ENCODE measurements at regions of chr9 and their contacts with region 1.

Region 1: DNA sequence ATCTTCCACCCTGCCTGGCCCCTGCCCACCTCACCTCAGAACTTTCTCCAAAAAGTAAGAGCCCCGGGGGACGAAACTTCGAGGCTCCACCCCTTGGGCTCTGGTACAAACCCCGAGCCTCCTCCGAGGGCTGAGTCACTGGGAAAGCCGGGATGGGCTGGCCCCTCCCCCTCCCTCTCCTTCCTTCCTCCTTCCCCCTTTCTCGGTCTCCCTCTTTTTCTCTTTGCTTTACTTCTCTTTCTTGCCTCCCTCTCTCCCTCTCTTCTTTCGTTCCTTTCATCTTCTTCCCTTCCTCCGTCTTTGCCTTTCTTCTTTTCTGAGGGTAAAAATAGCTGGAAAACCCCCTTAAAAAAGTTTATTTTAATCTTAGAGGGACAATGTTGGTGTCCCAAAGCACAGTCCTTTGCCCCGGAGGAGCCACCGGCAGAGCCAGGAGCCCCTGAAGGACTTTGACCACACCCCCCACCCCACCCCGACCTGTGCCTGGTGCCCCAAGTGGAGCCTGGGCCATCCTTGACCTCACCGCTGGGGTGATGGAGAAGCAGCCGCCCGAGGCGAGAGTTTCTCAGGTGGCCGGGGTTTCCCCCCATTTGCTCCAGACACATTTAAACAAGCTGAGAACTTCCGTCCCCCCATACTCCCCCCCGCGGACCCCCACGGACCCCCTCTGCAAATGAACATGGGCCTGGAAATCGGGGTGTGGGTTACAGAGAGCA is 5.7 kb upstream of the NOTCH1 start:
- DNase-seq: peak; percentile 53

Region 2: GRCh38 chr9:136482793-136483588 is 68.6 kb before region 1 on chr9 and contains the start of gene SEC16A:
- in situ Hi-C with region 1: loop called (anchors 10 kb)
- DNase-seq: peak; percentile 83
- total RNA-seq, gene SEC16A: 4.4 and 5.4 TPM in 2 replicates

Region 3: DNA sequence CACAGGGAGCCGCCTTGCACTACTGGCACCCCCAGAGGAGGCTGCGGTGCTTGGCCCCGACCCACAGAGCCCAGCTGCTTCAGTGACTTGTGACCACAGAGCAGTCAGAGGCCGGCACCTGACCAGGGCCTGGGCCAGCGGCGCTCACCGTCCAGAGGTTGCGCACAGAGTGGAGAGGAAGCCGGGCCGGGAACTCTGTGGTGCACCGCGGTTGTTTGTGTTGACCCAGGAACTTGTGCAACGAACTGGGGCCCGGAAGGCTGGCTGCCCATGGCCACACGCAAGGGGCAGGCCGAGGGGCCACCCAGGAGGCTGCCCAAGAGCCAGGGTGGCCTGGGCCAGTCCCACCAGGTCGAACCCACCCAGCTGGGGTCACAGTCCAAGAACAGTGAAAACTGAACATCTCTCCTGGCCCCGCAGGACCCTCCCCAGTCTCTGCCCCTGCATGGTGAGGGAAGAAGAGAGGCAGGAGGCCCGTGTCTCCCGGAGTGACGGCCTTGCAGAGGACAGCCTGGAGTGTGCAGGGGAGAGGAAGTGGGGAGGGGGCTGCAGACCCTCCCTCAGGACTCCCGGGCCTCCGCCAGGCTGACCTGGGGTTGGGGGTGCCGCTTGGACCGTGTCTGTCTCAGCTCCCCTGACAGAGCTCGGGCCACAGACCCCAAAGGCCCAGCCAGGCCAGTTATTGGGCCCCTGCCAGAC is 68.3 kb after region 1 on chr9:
- in situ Hi-C with region 1: no loop called
- DNase-seq: no peak

Region 4: DNA sequence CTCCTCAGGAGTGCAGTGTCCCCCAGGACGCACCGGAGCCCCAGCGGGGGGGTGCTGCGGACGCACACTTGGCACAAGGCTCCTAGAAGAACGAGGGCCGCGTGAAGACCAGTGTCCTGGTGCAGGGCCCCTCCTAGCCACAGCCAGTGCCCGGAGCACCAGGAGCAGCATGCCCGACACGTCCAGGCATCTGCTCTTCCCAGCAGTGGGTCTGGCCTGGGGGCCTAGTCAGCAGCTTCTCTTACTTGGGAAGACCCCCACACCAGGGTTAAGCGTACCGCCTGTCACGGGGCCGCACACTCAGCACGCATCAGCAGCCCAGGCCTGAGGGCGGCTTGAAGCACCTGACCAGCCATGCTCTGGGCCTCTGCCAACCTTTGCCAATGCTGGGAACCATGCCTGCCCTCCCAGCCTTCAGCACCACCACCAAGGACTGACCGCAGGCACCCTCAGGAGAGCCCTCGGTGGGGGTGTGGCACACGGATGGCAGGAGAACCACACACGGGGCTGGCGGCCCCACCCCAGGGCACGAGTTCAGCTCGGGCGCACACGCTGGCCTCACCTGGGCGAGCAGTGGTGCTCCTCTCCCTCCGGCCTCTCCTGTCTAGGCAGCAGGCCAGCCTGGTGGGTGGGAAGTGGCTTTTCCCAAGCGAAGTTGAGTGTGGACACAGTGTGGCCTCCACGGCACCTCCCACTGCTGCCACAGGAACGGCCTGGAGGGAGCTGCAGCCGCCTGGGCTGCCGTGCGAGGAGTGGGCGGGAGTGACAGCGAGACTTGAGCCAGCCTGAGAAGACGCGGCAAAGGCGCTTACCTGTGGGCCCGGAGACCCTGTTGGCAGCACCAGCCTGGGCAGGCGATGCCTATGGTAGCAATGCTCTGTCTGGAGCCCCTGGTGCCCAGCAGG is 278.7 kb after region 1 on chr9:
- in situ Hi-C with region 1: no loop called
- DNase-seq: no peak

Region 5: DNA sequence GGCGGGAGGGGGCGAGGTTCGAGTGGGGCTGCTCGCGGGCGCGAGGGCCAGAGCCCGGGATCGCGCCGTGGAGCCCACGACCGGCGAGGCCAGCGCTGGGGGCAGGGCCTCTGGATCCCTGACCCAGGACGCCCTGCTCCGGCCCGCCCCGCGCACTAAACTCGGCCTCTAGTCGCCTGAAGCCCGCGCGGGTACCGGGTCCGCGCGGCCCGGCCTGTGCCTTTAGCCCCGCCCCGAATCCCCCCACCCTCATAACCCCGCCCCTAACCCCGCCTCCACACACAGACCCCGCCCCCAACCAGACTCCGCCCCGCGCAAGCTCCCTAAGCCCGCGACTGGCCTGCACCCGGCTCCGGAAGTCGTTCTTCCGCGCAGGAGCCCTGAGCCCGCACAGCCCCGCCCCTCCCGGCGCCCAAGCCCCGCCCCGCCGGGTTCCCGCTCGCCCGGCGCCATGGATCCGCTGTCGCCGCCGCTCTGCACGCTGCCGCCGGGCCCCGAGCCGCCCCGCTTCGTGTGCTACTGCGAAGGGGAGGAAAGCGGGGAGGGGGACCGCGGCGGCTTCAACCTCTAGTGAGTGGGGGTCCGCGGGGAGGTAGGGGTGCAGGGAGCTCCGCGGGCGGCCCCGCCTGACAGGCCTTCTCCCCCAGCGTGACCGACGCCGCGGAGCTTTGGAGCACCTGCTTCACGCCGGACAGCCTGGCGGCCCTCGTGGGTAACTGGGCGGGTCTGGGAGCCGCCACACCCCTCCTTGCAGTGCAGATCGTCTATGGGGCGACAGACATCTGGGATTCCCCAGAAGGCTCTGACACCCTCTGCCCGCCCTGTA is 440.6 kb after region 1 on chr9 and contains the start of gene PAXX:
- in situ Hi-C with region 1: no loop called
- DNase-seq: peak; percentile 80
- total RNA-seq, gene PAXX: 129 and 137 TPM in 2 replicates

Region 6: DNA sequence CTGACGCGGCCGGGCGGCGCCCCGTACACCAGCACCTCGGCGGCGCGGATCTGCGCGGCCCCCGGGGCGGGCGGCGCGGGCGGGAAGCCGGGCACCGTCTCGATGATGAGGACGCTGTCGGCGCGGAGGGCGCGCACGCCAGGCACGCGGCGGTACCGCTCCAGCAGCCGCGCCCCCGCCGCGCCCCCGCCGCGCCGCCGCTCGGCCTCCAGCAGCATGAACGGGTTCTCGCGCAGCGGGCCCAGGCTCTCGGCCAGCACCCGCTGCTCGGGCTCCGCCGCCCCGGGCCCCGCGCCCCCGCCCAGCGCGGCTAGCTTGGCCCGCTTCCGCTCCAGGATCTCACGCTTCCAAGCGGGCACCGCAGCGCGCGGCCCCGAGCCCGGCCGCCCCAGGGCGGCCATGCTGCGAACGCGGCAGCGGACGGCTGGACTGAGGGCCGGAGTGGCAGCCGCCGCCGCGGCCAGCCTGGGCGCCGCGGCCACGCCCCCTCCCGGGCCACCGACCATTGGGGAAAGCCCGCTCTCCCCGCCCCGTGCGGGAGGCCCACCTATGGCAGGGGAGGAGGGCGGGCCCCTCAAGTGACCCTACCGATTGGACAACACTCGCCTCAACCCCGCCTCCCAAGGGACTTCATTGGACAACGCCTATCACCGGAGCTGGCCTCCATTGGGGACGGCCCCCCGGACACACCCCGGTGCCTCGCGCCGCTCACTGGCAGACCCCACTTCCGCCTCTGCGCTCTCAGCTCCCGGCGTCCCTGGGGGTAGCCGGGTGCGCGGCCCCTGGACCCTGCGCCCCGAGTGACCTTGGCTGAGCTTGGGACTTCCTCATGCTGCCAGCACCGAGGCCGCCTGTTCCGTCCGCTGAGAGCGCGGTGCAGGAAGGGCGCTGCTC is 649.0 kb after region 1 on chr9 and contains the start of gene TPRN:
- in situ Hi-C with region 1: no loop called
- DNase-seq: peak; percentile 99
- total RNA-seq, gene TPRN: 13.9 and 15.2 TPM in 2 replicates

Measured in Caki2 (cell line).